SK-N-SH (cell line): ENCODE measurements at regions of chr11 and their contacts with region 1.

Region 1: DNA sequence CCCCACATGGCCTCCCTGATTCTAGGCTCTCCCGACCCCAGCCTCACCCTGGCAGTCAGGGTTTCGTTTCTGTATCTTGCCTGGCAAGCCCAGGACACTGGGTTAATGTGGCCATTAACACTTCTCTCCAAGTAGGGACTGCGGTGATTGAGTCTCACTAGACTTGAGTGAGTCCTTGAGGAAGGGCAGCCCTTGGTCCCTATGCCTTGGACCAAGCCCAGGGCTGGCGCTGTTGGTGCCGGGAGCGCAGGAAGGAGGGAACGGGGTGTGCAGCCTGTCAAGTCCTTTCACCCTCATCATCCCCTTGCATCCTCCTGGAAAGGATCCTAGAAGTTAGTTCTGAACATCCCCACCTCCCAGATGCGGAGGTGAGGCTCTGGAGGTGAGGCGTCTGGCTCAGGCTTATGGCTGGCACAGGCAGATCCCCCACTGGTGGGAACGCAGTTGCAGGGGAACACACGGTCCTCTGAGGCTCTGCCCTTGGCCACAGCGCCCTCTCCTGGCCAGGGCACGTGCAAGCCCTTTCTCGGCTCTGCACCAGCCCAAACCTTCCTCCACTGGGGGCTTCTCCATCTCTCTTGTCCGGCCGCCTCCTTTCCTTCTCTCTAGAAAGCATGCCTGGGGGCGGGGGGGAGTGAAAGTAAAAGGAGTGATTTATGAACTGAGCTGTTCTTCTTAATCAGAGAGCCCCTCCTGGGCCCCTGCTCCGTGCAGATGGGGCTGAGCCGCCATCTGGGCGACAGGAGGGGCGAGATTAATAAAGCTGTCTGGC is 56.7 kb downstream of the TP53I11 start:
- DNase-seq: peak; percentile 86
- H3K4me3 ChIP-seq: peak overlapping the region in 1 of 2 experiments; percentile 46; a peak in 1 of 4 replicates
- H3K27ac ChIP-seq: peak overlapping the region in 1 of 2 experiments; percentile 64; a peak in 2 of 4 replicates
- H3K4me1 ChIP-seq: peaks cover 0 to 35% of the 10 kb centered on the region in 2 experiments; a peak in 1 of 4 replicates
- H3K27me3 ChIP-seq: no peaks in the 10 kb centered on the region; the same call in 1 of the 2 replicates
- CTCF ChIP-seq: peak; percentile 91
- EP300 ChIP-seq: no peak
- RAD21 ChIP-seq: peak; percentile 94

Region 2: GRCh38 chr11:44178381-44178780 is 715.7 kb before region 1 on chr11:
- CTCF ChIA-PET with region 1: no interaction called
- POLR2A ChIA-PET with region 1: no interaction called
- DNase-seq: no peak
- H3K4me3 ChIP-seq: no peak overlapping the region
- H3K27ac ChIP-seq: no peak overlapping the region
- H3K4me1 ChIP-seq: peaks cover 5 to 39% of the 10 kb centered on the region in 2 experiments; a peak in 3 of 4 replicates
- H3K27me3 ChIP-seq: no peaks in the 10 kb centered on the region
- CTCF ChIP-seq: no peak
- EP300 ChIP-seq: no peak
- RAD21 ChIP-seq: no peak

Region 3: GRCh38 chr11:44694443-44694842 is 199.6 kb before region 1 on chr11:
- CTCF ChIA-PET with region 1: interaction called, 12 read pairs
- POLR2A ChIA-PET with region 1: interaction called, 3 read pairs
- DNase-seq: no peak
- H3K4me3 ChIP-seq: no peak overlapping the region
- H3K27ac ChIP-seq: peak overlapping the region in 1 of 2 experiments; percentile 93; a peak in 2 of 4 replicates
- H3K4me1 ChIP-seq: peaks cover 0 to 46% of the 10 kb centered on the region in 2 experiments; a peak in 2 of 4 replicates
- H3K27me3 ChIP-seq: no peaks in the 10 kb centered on the region
- CTCF ChIP-seq: no peak
- EP300 ChIP-seq: no peak
- RAD21 ChIP-seq: no peak

Region 4: DNA sequence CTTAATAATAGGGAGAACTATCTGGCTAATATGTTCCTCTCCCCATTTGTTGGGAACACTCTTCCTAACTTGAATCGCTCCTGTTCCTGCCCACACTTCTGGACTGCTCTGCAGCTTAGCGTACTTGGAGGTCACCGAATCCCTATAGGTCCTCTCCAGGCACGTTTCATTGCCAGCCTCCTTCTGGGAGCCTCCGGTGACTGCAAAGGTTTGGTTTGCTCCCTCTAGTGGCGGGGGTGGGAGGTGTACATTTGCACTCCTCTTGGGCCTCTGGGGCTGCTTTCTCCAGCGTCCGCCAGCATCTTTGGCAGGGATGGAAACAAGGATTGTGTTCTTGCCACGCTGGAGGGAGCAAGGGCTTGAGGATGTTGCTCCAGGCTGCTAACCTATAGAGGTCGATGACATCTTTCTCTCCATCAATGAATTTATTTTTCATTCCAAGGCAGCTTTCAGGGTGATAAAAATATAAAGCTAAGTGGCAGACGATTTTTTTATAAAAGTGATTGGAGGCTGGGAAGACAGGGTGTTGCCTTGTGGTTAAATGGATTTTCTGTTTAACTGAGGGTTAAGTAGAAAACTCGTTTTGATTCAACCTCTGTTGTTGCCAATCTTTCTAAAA is 118.6 kb before region 1 on chr11:
- CTCF ChIA-PET with region 1: interaction called, 14 read pairs
- POLR2A ChIA-PET with region 1: no interaction called
- DNase-seq: peak; percentile 53
- H3K4me3 ChIP-seq: no peak overlapping the region
- H3K27ac ChIP-seq: peak overlapping the region in 1 of 2 experiments; percentile 99; a peak in 3 of 4 replicates
- H3K4me1 ChIP-seq: peaks cover 21 to 77% of the 10 kb centered on the region in 2 experiments; a peak in 3 of 4 replicates
- H3K27me3 ChIP-seq: no peaks in the 10 kb centered on the region
- CTCF ChIP-seq: peak; percentile 74
- EP300 ChIP-seq: no peak
- RAD21 ChIP-seq: peak; percentile 50

Region 5: DNA sequence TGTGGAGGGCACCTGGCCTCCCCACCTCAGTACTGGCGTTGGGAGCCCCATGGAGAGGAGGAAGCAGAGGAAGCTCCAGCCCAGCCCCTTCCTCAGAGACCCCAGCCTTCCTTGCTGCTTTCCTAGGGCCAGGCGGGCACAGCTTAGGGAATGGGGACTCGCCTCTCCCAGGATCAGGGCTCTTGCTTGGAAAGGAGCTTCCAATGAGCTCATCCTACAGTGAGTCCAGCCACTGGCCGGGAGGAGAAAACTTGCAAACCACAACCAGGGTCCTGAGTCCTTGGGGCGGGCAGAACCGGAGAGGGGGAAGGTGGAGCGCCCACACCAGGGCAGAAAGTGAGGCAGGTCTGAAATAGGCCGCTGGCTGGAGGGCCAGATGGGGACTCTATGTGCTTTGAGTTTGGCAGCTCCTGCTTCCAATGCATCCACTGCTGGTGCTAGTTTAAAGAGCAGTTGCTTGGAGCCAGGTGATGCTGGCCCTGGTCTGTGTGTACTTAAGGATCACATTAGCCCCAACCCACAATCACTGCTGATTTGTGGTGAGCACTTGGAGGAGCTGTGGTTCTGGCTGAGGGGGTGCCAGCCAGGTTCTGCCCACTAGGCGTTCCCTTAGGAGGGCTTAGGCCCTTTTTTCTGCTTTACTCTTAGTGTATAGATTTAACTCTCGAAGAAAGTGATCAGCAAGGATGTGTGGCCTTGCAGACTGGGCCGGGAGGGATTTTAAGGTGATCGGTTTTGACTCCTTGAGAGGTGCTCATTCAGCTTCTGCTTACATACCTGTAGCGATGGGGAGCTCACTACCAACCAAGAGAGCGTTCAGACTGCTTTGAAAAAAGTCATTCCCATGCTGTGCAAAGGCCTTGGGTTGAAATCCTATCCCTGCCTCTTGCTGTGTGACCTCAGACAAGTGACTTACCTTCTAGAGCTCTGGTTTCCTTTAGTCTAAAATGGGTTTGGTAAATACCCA is 25.3 kb before region 1 on chr11:
- CTCF ChIA-PET with region 1: interaction called, 13 read pairs
- POLR2A ChIA-PET with region 1: no interaction called
- DNase-seq: no peak
- H3K4me3 ChIP-seq: no peak overlapping the region
- H3K27ac ChIP-seq: peak overlapping the region in 1 of 2 experiments; percentile 92; a peak in 2 of 4 replicates
- H3K4me1 ChIP-seq: peaks cover 0 to 66% of the 10 kb centered on the region in 2 experiments; a peak in 2 of 4 replicates
- H3K27me3 ChIP-seq: no peaks in the 10 kb centered on the region
- CTCF ChIP-seq: no peak
- EP300 ChIP-seq: no peak
- RAD21 ChIP-seq: no peak

Region 6: DNA sequence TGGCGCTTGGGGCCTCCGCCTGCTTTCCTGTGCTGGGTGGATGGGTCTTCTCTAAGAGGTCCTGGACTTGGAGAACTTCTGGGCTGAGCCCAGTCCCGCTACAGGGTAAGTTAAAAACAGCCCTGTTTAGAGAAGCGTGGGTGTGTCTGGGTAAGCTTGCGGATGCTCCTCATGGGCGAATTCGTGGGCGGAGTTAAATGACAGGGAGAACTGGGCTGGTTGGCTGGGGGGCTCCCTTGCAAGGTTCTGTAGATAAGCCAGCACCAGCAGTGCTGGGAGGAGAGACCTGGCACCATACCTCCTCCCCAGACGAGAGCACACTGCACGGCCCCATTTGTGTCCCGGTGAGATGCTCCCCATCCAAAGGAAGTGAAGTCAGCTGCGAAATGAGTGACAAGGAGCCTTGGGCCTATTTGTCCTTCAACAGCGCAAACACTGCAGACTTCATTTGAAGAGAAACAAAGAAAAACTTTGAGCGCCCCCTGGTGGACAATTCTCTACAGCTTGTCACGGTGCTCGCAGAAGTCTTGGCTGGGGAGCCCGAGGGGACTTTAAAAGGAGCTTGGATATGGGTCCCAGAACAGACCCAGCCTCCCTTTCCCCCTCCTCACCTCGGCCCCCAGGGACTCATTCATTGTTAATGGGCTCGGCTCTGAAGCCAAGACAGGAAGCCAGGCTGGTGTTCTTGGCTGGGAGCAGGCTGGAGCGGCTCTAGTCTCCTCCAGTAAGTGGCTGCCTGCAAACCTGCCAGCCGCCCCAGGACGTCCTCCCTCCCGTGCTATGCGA is 17.2 kb after region 1 on chr11:
- CTCF ChIA-PET with region 1: interaction called, 45 read pairs
- POLR2A ChIA-PET with region 1: no interaction called
- DNase-seq: peak; percentile 83
- H3K4me3 ChIP-seq: no peak overlapping the region; a peak in 1 of 4 replicates
- H3K27ac ChIP-seq: no peak overlapping the region; a peak in 1 of 4 replicates
- H3K4me1 ChIP-seq: peaks cover 0 to 10% of the 10 kb centered on the region in 2 experiments; a peak in 1 of 4 replicates
- H3K27me3 ChIP-seq: 0 out of 2 replicates have a peak, but pooled peaks cover 5% of the 10 kb centered on the region
- CTCF ChIP-seq: peak; percentile 87
- EP300 ChIP-seq: no peak
- RAD21 ChIP-seq: peak; percentile 83